Mammary epithelial cell (primary cell): ENCODE measurements at regions of chr12 and their contacts with region 1.

Region 1: DNA sequence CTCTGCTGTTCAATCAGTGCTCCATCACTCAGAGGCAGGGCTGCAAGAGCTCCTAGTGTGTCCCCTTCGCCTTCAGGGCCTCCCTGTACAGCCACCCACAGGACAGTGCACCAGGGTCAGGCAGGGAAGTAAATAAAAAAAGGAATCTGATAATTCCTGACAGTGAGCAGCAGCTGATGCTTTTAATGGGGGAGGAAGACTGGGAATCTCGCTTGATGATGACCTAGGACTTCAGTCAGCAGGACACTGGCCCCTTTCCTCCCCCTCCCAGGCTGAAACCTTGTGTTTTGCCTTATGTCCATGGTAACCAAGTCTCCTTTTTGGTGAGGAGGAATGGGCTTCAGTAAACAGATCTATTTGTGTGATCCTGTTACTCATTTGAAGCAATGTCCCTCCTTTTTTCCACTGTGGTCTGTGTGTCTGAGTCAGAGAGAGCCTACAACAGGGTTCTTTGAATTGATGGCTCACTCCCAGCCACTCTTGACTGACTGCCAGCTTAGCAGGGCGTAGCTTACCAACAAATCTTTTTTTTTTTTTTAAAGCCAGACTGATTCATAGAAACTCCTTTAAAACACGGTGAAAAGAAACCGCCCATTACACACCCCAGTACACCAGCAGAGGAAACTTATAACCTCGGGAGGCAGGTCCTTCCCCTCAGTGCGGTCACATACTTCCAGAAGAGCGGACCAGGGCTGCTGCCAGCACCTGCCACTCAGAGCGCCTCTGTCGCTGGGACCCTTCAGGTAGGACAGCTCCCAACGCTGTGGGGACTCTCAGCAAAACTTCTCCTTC is at the start of gene EMP1:
- DNase-seq: peak; percentile 99
- H3K4me3 ChIP-seq: peak within 1 kb of the TSS; percentile 65 to 93 (median 81)
- H3K27ac ChIP-seq: peak within 1 kb of the TSS; percentile 98
- H3K4me1 ChIP-seq: peaks cover 50% of the 10 kb centered on the region
- H3K27me3 ChIP-seq: no peaks in the 10 kb centered on the region
- CTCF ChIP-seq: no peak
- total RNA-seq, gene EMP1: 33.7 to 204 TPM

Region 2: DNA sequence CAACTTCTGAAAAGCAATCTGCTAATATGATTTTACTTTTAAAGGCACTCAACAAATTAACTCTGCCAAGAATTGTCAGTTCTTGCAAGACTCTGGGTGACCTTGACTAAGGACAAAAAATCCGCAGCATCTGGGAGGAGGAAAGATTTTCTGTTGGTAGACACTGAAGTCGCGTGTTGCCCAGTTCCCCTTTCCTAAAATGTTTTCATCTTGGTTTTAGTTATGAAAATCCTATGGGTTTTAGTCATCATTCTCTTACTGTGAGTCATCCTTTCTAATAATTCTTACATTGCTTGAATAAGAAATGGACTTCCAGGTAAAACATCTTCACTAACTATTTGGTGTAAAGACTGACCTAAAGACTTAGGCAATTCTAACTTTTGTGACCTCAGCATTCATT is 102.0 kb before region 1 on chr12:
- CTCF ChIA-PET with region 1: no interaction called
- dilution Hi-C with region 1: no loop called
- in situ Hi-C with region 1: no loop called
- intact Hi-C with region 1: loop called (anchors 1 kb)
- DNase-seq: peak; percentile 54
- H3K4me3 ChIP-seq: no peak overlapping the region
- H3K27ac ChIP-seq: peak overlapping the region; percentile 54
- H3K4me1 ChIP-seq: peaks cover 41% of the 10 kb centered on the region
- H3K27me3 ChIP-seq: no peaks in the 10 kb centered on the region
- CTCF ChIP-seq: no peak

Region 3: GRCh38 chr12:13114251-13115052 is 81.9 kb before region 1 on chr12:
- CTCF ChIA-PET with region 1: no interaction called
- dilution Hi-C with region 1: no loop called
- in situ Hi-C with region 1: no loop called
- intact Hi-C with region 1: loop called (anchors 1 kb)
- DNase-seq: no peak
- H3K4me3 ChIP-seq: peak overlapping the region in 1 of 3 experiments; percentile 7
- H3K27ac ChIP-seq: peak overlapping the region; percentile 35
- H3K4me1 ChIP-seq: peaks cover 24% of the 10 kb centered on the region
- H3K27me3 ChIP-seq: no peaks in the 10 kb centered on the region
- CTCF ChIP-seq: no peak

Region 4: DNA sequence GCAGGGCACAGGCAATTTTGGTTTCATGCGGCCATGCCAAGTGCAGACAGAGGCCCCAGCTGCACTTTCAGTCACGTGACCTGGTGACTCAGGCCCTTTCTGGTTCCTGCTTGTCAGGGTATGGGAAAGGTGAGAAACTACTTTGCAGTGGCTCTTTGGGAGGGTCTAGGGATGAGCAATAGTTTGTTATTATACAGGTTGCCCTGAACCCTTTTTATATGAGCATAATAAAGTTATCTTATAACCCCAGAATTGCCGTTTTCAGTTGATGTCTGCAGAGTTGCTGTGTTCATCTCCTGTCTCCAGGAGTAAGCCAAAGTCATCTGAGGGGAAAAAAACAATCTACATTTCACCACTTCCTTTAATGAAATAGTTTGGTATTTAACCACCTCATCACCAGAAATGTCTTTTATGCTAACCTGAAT is 30.7 kb before region 1 on chr12:
- CTCF ChIA-PET with region 1: no interaction called
- dilution Hi-C with region 1: no loop called
- in situ Hi-C with region 1: no loop called
- intact Hi-C with region 1: loop called (anchors 1 kb)
- DNase-seq: peak; percentile 99
- H3K4me3 ChIP-seq: no peak overlapping the region
- H3K27ac ChIP-seq: peak overlapping the region; percentile 96
- H3K4me1 ChIP-seq: peaks cover 47% of the 10 kb centered on the region
- H3K27me3 ChIP-seq: no peaks in the 10 kb centered on the region
- CTCF ChIP-seq: no peak